WTC11 (cell line): ENCODE measurements at regions of chr1 and their contacts with region 1.

Region 1: GRCh38 chr1:225962440-225962975 is 21.5 kb upstream of the LEFTY2 start:
- DNase-seq: peak; percentile 91
- ATAC-seq: peak; percentile 98
- H3K4me3 Mint-ChIP-seq: no peak overlapping the region
- H3K27ac Mint-ChIP-seq: no peak overlapping the region
- H3K4me1 Mint-ChIP-seq: no peaks in the 10 kb centered on the region
- H3K27me3 Mint-ChIP-seq: peaks cover 37% of the 10 kb centered on the region
- CTCF ChIP-seq: peak; percentile 90

Region 2: GRCh38 chr1:225881969-225882693 is 80.4 kb before region 1 on chr1 and contains the start of gene TMEM63A:
- CTCF ChIA-PET with region 1: interaction called, 11 read pairs
- POLR2A ChIA-PET with region 1: no interaction called
- DNase-seq: peak; percentile 94
- ATAC-seq: peak; percentile 30
- H3K4me3 Mint-ChIP-seq: peak within 1 kb of the TSS; percentile 77
- H3K27ac Mint-ChIP-seq: peak within 1 kb of the TSS; percentile 85
- H3K4me1 Mint-ChIP-seq: peaks cover 54% of the 10 kb centered on the region
- H3K27me3 Mint-ChIP-seq: no peaks in the 10 kb centered on the region; the same call in 1 of the 2 replicates
- CTCF ChIP-seq: no peak
- total RNA-seq, gene TMEM63A: 61.1 to 91.7 TPM (median 69.3 TPM) in 3 replicates

Region 3: GRCh38 chr1:225944951-225945350 is 17.6 kb before region 1 on chr1:
- CTCF ChIA-PET with region 1: interaction called, 24 read pairs
- POLR2A ChIA-PET with region 1: interaction called, 7 read pairs
- DNase-seq: no peak
- ATAC-seq: no peak
- H3K4me3 Mint-ChIP-seq: no peak overlapping the region
- H3K27ac Mint-ChIP-seq: peak overlapping the region; percentile 93
- H3K4me1 Mint-ChIP-seq: peaks cover 86% of the 10 kb centered on the region
- H3K27me3 Mint-ChIP-seq: peaks cover 94% of the 10 kb centered on the region
- CTCF ChIP-seq: no peak

Region 4: GRCh38 chr1:225950905-225951497 is 11.5 kb before region 1 on chr1:
- CTCF ChIA-PET with region 1: interaction called, 24 read pairs
- POLR2A ChIA-PET with region 1: interaction called, 7 read pairs
- DNase-seq: peak; percentile 82
- ATAC-seq: peak; percentile 73
- H3K4me3 Mint-ChIP-seq: no peak overlapping the region
- H3K27ac Mint-ChIP-seq: no peak overlapping the region
- H3K4me1 Mint-ChIP-seq: peaks cover 44% of the 10 kb centered on the region
- H3K27me3 Mint-ChIP-seq: peaks cover 99% of the 10 kb centered on the region
- CTCF ChIP-seq: no peak

Region 5: GRCh38 chr1:225973158-225973557 is 10.7 kb after region 1 on chr1:
- CTCF ChIA-PET with region 1: interaction called, 13 read pairs
- POLR2A ChIA-PET with region 1: interaction called, 3 read pairs
- DNase-seq: no peak
- ATAC-seq: no peak
- H3K4me3 Mint-ChIP-seq: no peak overlapping the region
- H3K27ac Mint-ChIP-seq: no peak overlapping the region
- H3K4me1 Mint-ChIP-seq: no peaks in the 10 kb centered on the region
- H3K27me3 Mint-ChIP-seq: no peaks in the 10 kb centered on the region
- CTCF ChIP-seq: no peak

Region 6: DNA sequence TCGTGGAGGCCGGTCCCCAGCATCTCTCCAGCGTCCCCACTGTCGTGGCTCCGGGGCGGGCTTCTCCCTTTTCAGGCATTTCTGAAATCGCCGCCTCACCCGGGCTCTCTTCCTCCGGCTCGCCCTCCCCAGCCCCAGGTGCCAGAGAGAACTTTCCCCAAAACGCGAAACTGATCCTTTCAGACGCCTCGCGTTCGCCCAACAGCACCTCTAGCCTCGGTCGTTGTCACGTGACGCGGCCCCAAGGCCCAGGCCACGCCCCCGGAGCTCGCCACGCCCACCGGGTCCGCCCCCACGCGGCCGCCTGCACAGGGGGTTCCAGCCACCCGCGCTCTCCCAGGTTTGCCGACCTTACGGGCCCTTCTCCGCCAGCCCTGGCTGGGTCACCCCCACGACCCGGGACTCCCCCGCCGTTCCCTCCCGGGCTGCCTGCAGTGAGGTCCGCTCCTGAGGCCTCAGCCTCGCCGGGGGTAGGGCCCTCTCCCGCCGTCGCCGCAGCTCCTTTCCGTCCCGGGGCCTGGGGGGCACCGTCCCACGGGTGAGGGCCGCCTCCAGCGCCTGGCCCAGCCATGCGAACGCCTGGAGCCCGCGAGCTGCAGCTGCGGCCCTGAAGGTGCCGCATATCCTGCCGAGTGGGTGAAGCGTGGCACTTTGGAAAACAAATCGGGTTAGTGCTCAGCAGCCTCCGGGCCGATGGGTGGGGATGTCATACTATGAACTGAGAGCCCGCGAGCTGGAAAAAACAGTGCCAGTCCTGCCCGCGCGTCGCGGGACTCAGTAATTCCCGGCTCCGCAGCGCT is 121.0 kb after region 1 on chr1:
- CTCF ChIA-PET with region 1: no interaction called
- POLR2A ChIA-PET with region 1: no interaction called
- DNase-seq: peak; percentile 93
- ATAC-seq: peak; percentile 83
- H3K4me3 Mint-ChIP-seq: peak overlapping the region; percentile 85
- H3K27ac Mint-ChIP-seq: no peak overlapping the region
- H3K4me1 Mint-ChIP-seq: peaks cover 6% of the 10 kb centered on the region
- H3K27me3 Mint-ChIP-seq: peaks cover 59% of the 10 kb centered on the region
- CTCF ChIP-seq: no peak